ENCODE measurements at regions of chr17 and their contacts with region 1.

Region 1: DNA sequence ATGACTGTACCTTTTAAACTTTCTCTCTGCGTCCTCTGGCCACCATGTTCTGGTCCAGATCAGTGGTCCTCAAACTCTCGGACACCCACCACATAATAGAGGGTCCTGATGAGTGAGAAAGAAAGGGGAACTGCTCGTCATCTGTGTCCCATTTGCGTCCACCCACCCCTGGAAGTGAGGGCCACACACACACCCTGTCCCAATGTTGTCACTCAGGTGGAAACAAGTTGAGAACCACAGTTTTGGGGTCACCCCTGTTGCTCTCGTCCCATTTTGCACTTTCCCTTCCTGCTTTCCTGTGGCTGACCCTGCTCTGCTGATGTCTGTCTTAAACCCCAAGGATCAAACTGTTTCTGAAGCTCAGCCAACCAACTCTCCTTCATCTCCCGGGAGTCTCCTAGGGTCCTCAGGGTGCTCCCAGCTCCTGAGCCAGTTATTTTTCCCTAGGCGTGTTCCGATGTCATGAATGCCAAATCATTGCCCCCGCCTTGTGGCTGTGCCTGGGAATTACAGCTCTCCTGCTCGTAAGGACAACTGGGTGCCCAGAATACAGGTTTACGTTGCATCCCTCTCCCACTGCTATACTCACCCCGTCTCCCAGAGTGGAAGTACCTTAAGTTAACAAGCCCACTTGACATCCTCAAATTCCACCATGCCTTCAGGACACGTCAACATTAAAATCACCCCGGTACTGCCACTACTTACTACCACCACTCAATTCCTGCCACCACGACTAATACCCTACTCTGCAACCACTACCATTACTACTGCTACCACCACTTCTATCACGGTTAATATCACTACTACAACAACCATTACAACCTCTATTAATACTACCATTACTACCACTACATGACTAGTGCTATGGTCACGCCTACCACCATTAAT is 26.0 kb upstream of the HNF1B start:
- DNase-seq: peak; percentile 49
- H3K4me3 ChIP-seq: no peak overlapping the region
- H3K27ac ChIP-seq: no peak overlapping the region
- H3K4me1 ChIP-seq: no peaks in the 10 kb centered on the region
- H3K27me3 ChIP-seq: no peaks in the 10 kb centered on the region
- CTCF ChIP-seq: peak; percentile 78 to 91

Region 2: GRCh38 chr17:37527249-37527851 is 243.5 kb before region 1 on chr17:
- CTCF ChIA-PET with region 1: no interaction called
- dilution Hi-C with region 1: no loop called
- in situ Hi-C with region 1: no loop called
- intact Hi-C with region 1: loop called (anchors 1 kb)
- DNase-seq: peak; percentile 66
- H3K4me3 ChIP-seq: no peak overlapping the region
- H3K27ac ChIP-seq: no peak overlapping the region
- H3K4me1 ChIP-seq: no peaks in the 10 kb centered on the region
- H3K27me3 ChIP-seq: no peaks in the 10 kb centered on the region
- CTCF ChIP-seq: peak; percentile 82 to 84

Region 3: DNA sequence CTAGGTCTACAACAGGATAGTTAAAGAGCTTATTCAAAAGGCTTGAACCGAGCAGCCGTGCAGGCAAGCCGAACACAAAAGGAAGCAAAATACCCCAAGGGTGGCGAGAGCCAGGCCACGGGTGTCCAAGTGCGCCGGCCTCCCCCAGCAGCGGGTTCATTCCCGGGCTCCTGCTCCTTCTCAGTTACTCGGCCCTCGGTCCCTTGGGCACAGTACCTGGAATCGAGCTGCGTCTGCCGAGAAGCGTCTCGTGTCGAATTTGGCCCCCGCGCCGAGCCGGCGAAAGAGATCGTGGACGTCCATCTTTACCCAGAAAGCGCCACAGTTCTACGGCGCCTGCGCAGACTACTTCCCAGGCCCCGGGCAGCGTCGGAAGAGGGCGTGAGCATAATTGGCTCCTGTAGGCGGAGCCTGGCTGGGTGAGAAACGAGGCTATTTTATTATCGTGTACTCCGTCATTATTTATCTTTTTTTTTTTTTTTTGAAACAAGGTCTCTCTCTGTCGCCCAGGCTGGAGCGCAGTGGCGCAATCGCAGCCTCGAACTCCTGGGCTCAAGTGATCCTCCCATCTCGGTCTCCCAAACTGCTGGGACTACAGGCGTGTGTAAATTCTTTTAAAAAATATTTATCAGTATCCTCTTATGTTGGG is 127.6 kb before region 1 on chr17 and contains the start of gene DDX52:
- CTCF ChIA-PET with region 1: no interaction called
- dilution Hi-C with region 1: no loop called
- in situ Hi-C with region 1: loop called in 1 of 2 experiments (anchors 10 kb)
- intact Hi-C with region 1: no loop called
- DNase-seq: peak; percentile 88
- H3K4me3 ChIP-seq: peak within 1 kb of the TSS; percentile 81 to 96 (median 90)
- H3K27ac ChIP-seq: peak within 1 kb of the TSS; percentile 86
- H3K4me1 ChIP-seq: peaks cover 10% of the 10 kb centered on the region
- H3K27me3 ChIP-seq: no peaks in the 10 kb centered on the region
- CTCF ChIP-seq: no peak
- total RNA-seq, gene DDX52: 22.2 to 31.2 TPM

Region 4: DNA sequence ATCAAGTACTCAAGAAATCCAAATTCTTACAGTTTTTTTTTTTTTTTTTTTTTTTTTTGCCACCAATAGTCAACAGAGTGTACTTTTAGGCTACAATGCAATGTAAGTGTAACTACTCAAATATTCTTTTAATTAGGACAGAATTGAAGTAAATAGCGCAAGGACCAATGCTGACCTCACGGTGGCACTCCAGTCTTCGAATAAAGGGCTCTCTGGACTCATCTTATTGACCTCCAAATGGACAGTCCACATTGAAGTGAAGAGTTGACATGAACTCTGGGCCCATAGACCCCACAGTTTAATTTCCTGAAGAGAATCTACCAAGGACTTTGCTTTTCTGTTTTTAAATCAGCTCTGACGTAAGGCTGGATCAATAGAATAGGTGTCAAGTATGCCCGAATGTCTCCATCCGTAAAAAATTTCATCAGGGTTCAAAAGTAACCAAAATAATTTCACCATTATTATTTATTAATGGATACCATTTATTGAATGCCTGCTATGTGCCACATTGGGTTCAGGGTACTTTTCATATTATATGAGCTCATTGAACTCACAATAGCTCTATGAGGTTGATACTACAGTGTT is 120.4 kb before region 1 on chr17:
- CTCF ChIA-PET with region 1: interaction called, 23 read pairs
- dilution Hi-C with region 1: no loop called
- in situ Hi-C with region 1: loop called in 1 of 2 experiments (anchors 10 kb)
- intact Hi-C with region 1: loop called (anchors 1 kb)
- DNase-seq: peak; percentile 30
- H3K4me3 ChIP-seq: no peak overlapping the region
- H3K27ac ChIP-seq: no peak overlapping the region
- H3K4me1 ChIP-seq: peaks cover 3% of the 10 kb centered on the region
- H3K27me3 ChIP-seq: no peaks in the 10 kb centered on the region
- CTCF ChIP-seq: peak; percentile 55 to 67

Region 5: DNA sequence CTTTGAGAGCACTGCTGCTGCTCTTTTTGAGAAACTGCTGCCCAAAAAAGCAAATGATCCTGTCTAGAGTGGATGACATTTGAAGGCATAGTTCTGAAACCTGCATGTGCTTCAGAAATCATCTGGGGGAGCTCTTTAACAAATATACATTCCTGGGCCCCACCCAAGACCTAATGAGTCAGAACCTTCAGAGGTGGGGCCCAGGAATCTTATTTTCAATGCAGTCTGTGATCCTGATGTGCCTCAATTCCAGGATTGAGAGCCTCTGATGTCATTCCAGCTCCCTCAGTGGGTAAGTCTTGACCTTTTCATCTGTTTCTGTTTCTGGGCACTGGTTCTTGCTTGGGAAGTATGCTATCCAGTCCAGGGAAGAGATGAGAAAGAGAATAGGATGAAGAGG is 68.3 kb before region 1 on chr17:
- CTCF ChIA-PET with region 1: no interaction called
- dilution Hi-C with region 1: no loop called
- in situ Hi-C with region 1: no loop called
- intact Hi-C with region 1: loop called (anchors 1 kb)
- DNase-seq: peak; percentile 86
- H3K4me3 ChIP-seq: no peak overlapping the region
- H3K27ac ChIP-seq: peak overlapping the region; percentile 28
- H3K4me1 ChIP-seq: peaks cover 32% of the 10 kb centered on the region
- H3K27me3 ChIP-seq: no peaks in the 10 kb centered on the region
- CTCF ChIP-seq: peak in 1 of 2 donors; percentile 14